B cell (primary cell): ENCODE measurements at regions of chr7 and their contacts with region 1.

Region 1: GRCh38 chr7:38107486-38107893 is 70.6 kb upstream of the STARD3NL start:
- DNase-seq: peak; percentile 69
- ATAC-seq: peak; percentile 57
- H3K4me3 ChIP-seq: no peak overlapping the region
- H3K4me3 Mint-ChIP-seq: no peak overlapping the region
- H3K27ac ChIP-seq: no peak overlapping the region
- H3K27ac Mint-ChIP-seq: no peak overlapping the region
- H3K4me1 ChIP-seq: no peaks in the 10 kb centered on the region
- H3K4me1 Mint-ChIP-seq: no peaks in the 10 kb centered on the region
- H3K27me3 ChIP-seq: peaks cover 0 to 4% (median 2%) of the 10 kb centered on the region in 4 experiments
- H3K27me3 Mint-ChIP-seq: peaks cover 35% of the 10 kb centered on the region
- CTCF ChIP-seq: peak; percentile 94

Region 2: GRCh38 chr7:37942934-37943610 is 164.4 kb before region 1 on chr7:
- CTCF ChIA-PET with region 1: no interaction called
- POLR2A ChIA-PET with region 1: no interaction called
- intact Hi-C with region 1: no loop called
- DNase-seq: no peak
- ATAC-seq: no peak
- H3K4me3 ChIP-seq: no peak overlapping the region
- H3K4me3 Mint-ChIP-seq: no peak overlapping the region
- H3K27ac ChIP-seq: no peak overlapping the region
- H3K27ac Mint-ChIP-seq: no peak overlapping the region
- H3K4me1 ChIP-seq: no peaks in the 10 kb centered on the region
- H3K4me1 Mint-ChIP-seq: no peaks in the 10 kb centered on the region
- H3K27me3 ChIP-seq: no peaks in the 10 kb centered on the region
- H3K27me3 Mint-ChIP-seq: peaks cover 5% of the 10 kb centered on the region
- CTCF ChIP-seq: no peak

Region 3: DNA sequence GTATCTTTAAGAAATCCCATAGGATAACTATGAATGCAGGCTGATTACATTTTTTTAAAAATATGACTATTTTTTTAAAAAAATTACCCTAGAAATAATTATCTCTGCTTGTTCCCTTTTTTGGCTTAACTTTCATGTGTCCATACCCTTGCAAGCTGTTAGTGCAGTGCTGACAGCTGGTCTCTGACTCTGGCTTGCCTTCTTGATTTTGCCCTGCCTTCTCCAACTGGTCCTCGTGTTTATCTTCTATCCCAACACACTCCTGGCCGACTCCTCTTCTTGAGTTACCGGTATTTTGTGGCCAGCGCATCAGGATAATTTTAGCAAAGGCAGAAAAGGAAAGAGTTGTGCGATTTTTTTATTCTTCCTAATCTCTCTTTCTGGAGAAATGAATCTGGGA is 41.1 kb before region 1 on chr7:
- CTCF ChIA-PET with region 1: no interaction called
- POLR2A ChIA-PET with region 1: no interaction called
- intact Hi-C with region 1: no loop called
- DNase-seq: no peak
- ATAC-seq: no peak
- H3K4me3 ChIP-seq: no peak overlapping the region
- H3K4me3 Mint-ChIP-seq: no peak overlapping the region
- H3K27ac ChIP-seq: no peak overlapping the region
- H3K27ac Mint-ChIP-seq: no peak overlapping the region
- H3K4me1 ChIP-seq: no peaks in the 10 kb centered on the region
- H3K4me1 Mint-ChIP-seq: no peaks in the 10 kb centered on the region
- H3K27me3 ChIP-seq: no peaks in the 10 kb centered on the region
- H3K27me3 Mint-ChIP-seq: peaks cover 9% of the 10 kb centered on the region
- CTCF ChIP-seq: no peak

Region 4: GRCh38 chr7:38122501-38122900 is 15.0 kb after region 1 on chr7:
- CTCF ChIA-PET with region 1: interaction called, 12 read pairs
- POLR2A ChIA-PET with region 1: no interaction called
- intact Hi-C with region 1: no loop called
- DNase-seq: no peak
- ATAC-seq: no peak
- H3K4me3 ChIP-seq: no peak overlapping the region
- H3K4me3 Mint-ChIP-seq: no peak overlapping the region
- H3K27ac ChIP-seq: no peak overlapping the region
- H3K27ac Mint-ChIP-seq: no peak overlapping the region
- H3K4me1 ChIP-seq: no peaks in the 10 kb centered on the region
- H3K4me1 Mint-ChIP-seq: no peaks in the 10 kb centered on the region
- H3K27me3 ChIP-seq: peaks cover 0 to 3% (median 0%) of the 10 kb centered on the region in 4 experiments
- H3K27me3 Mint-ChIP-seq: peaks cover 5% of the 10 kb centered on the region
- CTCF ChIP-seq: no peak

Region 5: DNA sequence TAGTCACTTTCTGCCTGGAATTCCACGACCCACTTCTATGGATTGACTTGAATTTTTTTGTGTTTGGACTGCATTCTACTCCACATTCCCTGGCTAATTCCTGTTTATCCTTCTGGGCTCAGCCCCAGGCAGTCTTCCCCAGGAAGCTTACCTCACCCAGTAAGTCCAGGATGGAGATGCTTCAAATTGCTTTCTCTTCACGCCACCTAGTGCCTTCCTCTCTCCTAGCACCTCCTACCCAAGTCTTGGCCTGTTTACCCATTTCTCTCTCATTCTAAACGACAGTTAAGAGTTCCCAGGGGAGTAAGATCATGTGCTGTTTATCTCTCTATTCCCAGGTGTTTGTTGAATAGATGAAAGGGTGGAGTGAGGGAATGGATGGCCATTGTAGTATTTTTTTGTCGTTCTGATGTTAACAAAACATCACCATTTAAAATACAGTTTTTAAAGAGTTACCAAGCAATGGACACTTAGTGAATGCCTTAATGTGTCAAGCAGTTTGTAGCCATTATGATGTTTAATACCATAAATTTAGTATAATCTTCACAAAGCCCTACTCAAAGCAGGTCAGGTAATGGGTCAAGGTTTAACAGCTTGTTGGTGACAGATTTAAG is 211.4 kb after region 1 on chr7:
- CTCF ChIA-PET with region 1: interaction called, 5 read pairs
- POLR2A ChIA-PET with region 1: no interaction called
- intact Hi-C with region 1: loop called (anchors 2 kb)
- DNase-seq: peak; percentile 28
- ATAC-seq: peak; percentile 57
- H3K4me3 ChIP-seq: no peak overlapping the region
- H3K4me3 Mint-ChIP-seq: no peak overlapping the region
- H3K27ac ChIP-seq: no peak overlapping the region
- H3K27ac Mint-ChIP-seq: no peak overlapping the region
- H3K4me1 ChIP-seq: peaks cover 4 to 10% of the 10 kb centered on the region in 2 donors
- H3K4me1 Mint-ChIP-seq: peaks cover 8% of the 10 kb centered on the region
- H3K27me3 ChIP-seq: peaks cover 0 to 3% (median 0%) of the 10 kb centered on the region in 4 experiments
- H3K27me3 Mint-ChIP-seq: peaks cover 15% of the 10 kb centered on the region
- CTCF ChIP-seq: peak; percentile 28